Calu3 (cell line): ENCODE measurements at regions of chr21 and their contacts with region 1.

Region 1: GRCh38 chr21:33924079-33924765 is 8.6 kb upstream of the ATP5PO start:
- DNase-seq: peak; percentile 81
- H3K4me3 Mint-ChIP-seq: no peak overlapping the region
- H3K27ac Mint-ChIP-seq: no peak overlapping the region
- H3K4me1 Mint-ChIP-seq: peaks cover 6% of the 10 kb centered on the region
- H3K27me3 Mint-ChIP-seq: no peaks in the 10 kb centered on the region
- CTCF ChIP-seq: peak; percentile 69

Region 2: GRCh38 chr21:33588485-33589335 is 335.5 kb before region 1 on chr21 and contains the start of gene DONSON:
- CTCF ChIA-PET with region 1: no interaction called
- intact Hi-C with region 1: no loop called
- DNase-seq: peak; percentile 91
- H3K4me3 Mint-ChIP-seq: peak within 1 kb of the TSS; percentile 85
- H3K27ac Mint-ChIP-seq: peak within 1 kb of the TSS; percentile 72
- H3K4me1 Mint-ChIP-seq: no peaks in the 10 kb centered on the region
- H3K27me3 Mint-ChIP-seq: no peaks in the 10 kb centered on the region
- CTCF ChIP-seq: no peak
- total RNA-seq, gene DONSON: 13.8 and 18.2 TPM in 2 replicates

Region 3: GRCh38 chr21:34078915-34079314 is 154.7 kb after region 1 on chr21:
- CTCF ChIA-PET with region 1: interaction called, 4 read pairs
- intact Hi-C with region 1: loop called (anchors 5 kb)
- DNase-seq: no peak
- H3K4me3 Mint-ChIP-seq: no peak overlapping the region
- H3K27ac Mint-ChIP-seq: no peak overlapping the region
- H3K4me1 Mint-ChIP-seq: peaks cover 34% of the 10 kb centered on the region
- H3K27me3 Mint-ChIP-seq: no peaks in the 10 kb centered on the region
- CTCF ChIP-seq: no peak

Region 4: GRCh38 chr21:34202553-34203372 is 278.5 kb after region 1 on chr21:
- CTCF ChIA-PET with region 1: interaction called, 12 read pairs
- intact Hi-C with region 1: loop called (anchors 5 kb)
- DNase-seq: no peak
- H3K4me3 Mint-ChIP-seq: no peak overlapping the region
- H3K27ac Mint-ChIP-seq: no peak overlapping the region
- H3K4me1 Mint-ChIP-seq: no peaks in the 10 kb centered on the region
- H3K27me3 Mint-ChIP-seq: no peaks in the 10 kb centered on the region
- CTCF ChIP-seq: no peak

Region 5: GRCh38 chr21:34243562-34243961 is 319.3 kb after region 1 on chr21:
- CTCF ChIA-PET with region 1: interaction called, 3 read pairs
- intact Hi-C with region 1: loop called (anchors 5 kb)
- DNase-seq: peak; percentile 8
- H3K4me3 Mint-ChIP-seq: no peak overlapping the region
- H3K27ac Mint-ChIP-seq: no peak overlapping the region
- H3K4me1 Mint-ChIP-seq: no peaks in the 10 kb centered on the region
- H3K27me3 Mint-ChIP-seq: no peaks in the 10 kb centered on the region
- CTCF ChIP-seq: no peak

Region 6: DNA sequence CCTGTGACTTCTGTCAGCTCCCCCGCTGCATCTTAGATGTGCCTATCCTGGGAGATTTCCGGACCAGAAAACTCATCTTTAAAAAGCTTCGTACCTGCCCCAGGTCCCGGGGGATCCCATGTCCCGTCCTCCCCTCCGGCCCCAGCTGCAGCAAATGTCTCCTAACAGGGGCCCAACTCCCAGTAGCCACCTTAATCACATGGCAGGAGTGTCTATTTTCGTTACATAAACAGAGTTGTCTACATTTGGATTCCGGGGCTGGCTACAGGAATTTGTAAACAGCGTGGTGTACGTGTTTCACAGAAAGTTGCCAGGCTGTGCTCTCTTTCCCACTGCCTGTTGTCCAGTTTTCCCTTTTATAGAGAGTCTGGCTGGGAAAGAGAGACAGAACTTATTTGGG is 421.7 kb after region 1 on chr21:
- CTCF ChIA-PET with region 1: interaction called, 37 read pairs
- intact Hi-C with region 1: loop called (anchors 2 kb)
- DNase-seq: no peak
- H3K4me3 Mint-ChIP-seq: no peak overlapping the region
- H3K27ac Mint-ChIP-seq: no peak overlapping the region
- H3K4me1 Mint-ChIP-seq: no peaks in the 10 kb centered on the region
- H3K27me3 Mint-ChIP-seq: peaks cover 17% of the 10 kb centered on the region
- CTCF ChIP-seq: no peak

Region 7: DNA sequence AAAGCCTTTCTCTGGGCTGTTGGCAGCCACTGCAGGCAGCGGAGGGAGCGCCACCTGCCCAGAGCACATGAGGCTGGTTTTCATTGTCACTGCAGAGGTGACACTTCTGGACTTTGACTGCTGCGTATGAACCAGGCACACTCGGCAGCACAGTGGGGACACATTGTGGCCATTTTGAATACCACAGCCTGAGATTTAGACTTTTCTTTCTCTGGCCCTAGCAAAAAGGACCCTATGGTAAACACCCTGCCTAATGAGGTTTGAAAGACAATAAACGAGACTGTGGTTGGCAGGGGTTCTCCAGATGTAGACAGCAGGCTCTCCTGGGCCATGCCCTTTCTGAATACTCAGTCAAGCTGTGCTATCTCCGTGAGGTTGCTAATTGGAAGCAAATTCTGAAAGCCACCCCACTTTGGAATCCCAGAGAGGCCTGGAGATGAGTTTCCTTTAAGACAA is 427.6 kb after region 1 on chr21:
- CTCF ChIA-PET with region 1: interaction called, 37 read pairs
- intact Hi-C with region 1: loop called (anchors 2 kb)
- DNase-seq: peak; percentile 39
- H3K4me3 Mint-ChIP-seq: no peak overlapping the region
- H3K27ac Mint-ChIP-seq: no peak overlapping the region
- H3K4me1 Mint-ChIP-seq: no peaks in the 10 kb centered on the region
- H3K27me3 Mint-ChIP-seq: peaks cover 36% of the 10 kb centered on the region
- CTCF ChIP-seq: peak; percentile 29